Gastrocnemius medialis (tissue), 4 donors: ENCODE measurements at regions of chr14 and their contacts with region 1.

Region 1: DNA sequence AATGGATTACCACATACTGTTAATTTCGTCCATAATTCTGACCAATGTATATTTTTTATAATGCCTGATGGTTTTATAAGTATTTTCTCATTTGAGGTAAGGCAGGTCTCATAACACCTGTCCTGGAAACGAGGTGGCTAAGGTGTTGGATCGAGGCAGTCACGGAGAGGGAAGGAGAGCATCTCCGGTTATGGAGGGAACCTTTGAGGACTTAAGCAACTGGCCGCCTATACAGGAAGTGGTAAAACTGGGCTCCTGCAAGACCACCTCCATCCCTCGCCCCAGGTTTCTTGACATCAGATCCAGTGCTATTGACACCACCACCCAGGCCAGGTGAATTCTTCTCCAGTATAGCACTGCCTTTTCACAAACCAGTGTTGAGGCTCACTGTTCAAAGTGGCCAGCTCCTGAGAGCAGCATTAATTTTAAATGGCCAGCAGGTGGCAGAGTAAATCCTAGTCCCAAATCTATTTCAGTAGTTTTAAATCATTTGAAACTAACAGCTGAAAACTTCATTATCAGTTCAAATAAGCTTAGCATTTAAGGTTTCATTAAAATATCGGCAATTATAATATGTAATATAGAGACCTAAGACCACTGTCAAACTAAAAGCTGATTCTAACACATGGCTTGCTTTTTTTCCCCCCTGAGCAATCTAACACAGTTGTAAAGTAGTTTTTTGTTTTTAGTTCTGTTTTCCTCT is 100.8 kb downstream of the PPM1A start:
- DNase-seq: no peak
- ATAC-seq: peak; percentile 62 to 69
- H3K4me3 ChIP-seq: peak overlapping the region; percentile 0 to 47 (median 24)
- H3K27ac ChIP-seq: peak overlapping the region in 1 of 4 donors; percentile 23
- H3K4me1 ChIP-seq: peaks cover 0 to 12% of the 10 kb centered on the region in 2 donors
- H3K27me3 ChIP-seq: no peaks in the 10 kb centered on the region
- CTCF ChIP-seq: peak; percentile 42 to 75 (median 56)
- POLR2A ChIP-seq: no peak

Region 2: DNA sequence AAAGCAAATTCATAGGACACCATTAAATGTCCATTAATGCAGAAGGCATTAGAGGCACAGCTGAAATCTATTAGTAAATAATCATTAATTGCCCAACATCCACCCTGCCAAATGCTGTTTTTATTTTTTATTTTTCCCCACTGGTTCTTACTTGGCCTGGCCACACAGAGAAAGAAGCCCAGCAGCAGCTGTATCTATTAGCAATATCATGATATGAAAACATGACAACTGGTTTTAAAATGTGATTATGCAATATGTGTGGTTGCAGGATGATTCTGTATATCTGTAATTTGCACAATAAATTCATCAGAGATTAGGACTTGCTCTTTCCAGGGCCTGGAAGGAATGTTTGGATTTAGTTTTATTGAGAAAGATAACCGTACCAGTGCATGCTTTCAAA is 204.0 kb after region 1 on chr14:
- in situ Hi-C with region 1: loop called in 1 of 4 experiments (anchors 10 kb)
- intact Hi-C with region 1: no loop called
- DNase-seq: no peak
- ATAC-seq: no peak
- H3K4me3 ChIP-seq: no peak overlapping the region
- H3K27ac ChIP-seq: no peak overlapping the region
- H3K4me1 ChIP-seq: no peaks in the 10 kb centered on the region
- H3K27me3 ChIP-seq: no peaks in the 10 kb centered on the region
- CTCF ChIP-seq: no peak
- POLR2A ChIP-seq: no peak

Region 3: GRCh38 chr14:60561845-60562746 is 212.3 kb after region 1 on chr14:
- in situ Hi-C with region 1: loop called (anchors 5 to 10 kb)
- intact Hi-C with region 1: loop called (anchors 2 kb)
- DNase-seq: peak; percentile 13 to 32
- ATAC-seq: peak; percentile 63 to 71
- H3K4me3 ChIP-seq: no peak overlapping the region
- H3K27ac ChIP-seq: no peak overlapping the region
- H3K4me1 ChIP-seq: peaks cover 7 to 20% of the 10 kb centered on the region in 2 donors
- H3K27me3 ChIP-seq: no peaks in the 10 kb centered on the region
- CTCF ChIP-seq: peak in 4 of 5 experiments; percentile 15 to 59 (median 45)
- POLR2A ChIP-seq: no peak